ENCODE measurements at regions of chr9 and their contacts with region 1.

Region 1: DNA sequence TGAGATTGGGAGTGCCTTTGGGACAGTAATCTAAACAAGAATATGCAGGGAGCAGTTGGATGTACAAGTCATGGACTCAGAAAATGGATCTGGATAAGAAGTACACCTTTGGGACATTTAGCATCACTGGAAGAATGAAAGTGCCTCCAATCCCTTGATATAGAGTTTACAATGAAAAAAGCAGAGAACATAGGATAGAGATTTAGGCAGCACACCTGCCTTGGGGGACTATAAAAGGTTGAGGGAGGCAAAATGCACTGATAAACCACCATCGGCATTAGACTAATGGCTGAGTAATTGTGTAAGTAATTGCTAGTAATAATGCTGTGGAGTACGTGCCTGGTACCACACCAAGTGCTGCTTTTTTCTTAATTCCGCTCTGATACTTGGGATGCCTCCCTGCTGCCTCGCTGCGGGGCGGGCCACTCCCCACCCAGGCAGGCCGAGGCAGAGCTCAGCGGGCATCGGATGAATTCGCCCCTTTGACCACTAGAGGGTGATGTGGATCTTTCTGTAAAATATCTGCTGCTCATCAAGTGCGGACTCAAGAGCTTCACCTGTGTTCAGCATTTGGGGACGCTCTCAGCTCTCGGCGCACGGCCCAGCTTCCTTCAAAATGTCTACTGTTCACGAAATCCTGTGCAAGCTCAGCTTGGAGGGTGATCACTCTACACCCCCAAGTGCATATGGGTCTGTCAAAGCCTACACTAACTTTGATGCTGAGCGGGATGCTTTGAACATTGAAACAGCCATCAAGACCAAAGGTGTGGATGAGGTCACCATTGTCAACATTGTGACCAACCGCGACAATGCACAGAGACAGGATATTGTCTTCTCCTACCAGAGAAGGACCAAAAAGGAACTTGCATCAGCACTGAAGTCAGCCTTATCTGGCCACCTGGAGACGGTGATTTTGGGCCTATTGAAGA is 99.9 kb downstream of the ANKRD18B start:
- DNase-seq: peak; percentile 79
- ATAC-seq: peak; percentile 94
- H3K4me3 Mint-ChIP-seq: no peak overlapping the region
- H3K27ac Mint-ChIP-seq: no peak overlapping the region
- H3K4me1 Mint-ChIP-seq: peaks cover 6% of the 10 kb centered on the region
- H3K27me3 Mint-ChIP-seq: peaks cover 21% of the 10 kb centered on the region

Region 2: GRCh38 chr9:33638391-33638915 is 14.5 kb after region 1 on chr9:
- CTCF ChIA-PET with region 1: interaction called, 22 read pairs
- POLR2A ChIA-PET with region 1: no interaction called
- intact Hi-C with region 1: no loop called
- DNase-seq: no peak
- ATAC-seq: no peak
- H3K4me3 Mint-ChIP-seq: no peak overlapping the region
- H3K27ac Mint-ChIP-seq: no peak overlapping the region
- H3K4me1 Mint-ChIP-seq: no peaks in the 10 kb centered on the region
- H3K27me3 Mint-ChIP-seq: peaks cover 47% of the 10 kb centered on the region

Region 3: DNA sequence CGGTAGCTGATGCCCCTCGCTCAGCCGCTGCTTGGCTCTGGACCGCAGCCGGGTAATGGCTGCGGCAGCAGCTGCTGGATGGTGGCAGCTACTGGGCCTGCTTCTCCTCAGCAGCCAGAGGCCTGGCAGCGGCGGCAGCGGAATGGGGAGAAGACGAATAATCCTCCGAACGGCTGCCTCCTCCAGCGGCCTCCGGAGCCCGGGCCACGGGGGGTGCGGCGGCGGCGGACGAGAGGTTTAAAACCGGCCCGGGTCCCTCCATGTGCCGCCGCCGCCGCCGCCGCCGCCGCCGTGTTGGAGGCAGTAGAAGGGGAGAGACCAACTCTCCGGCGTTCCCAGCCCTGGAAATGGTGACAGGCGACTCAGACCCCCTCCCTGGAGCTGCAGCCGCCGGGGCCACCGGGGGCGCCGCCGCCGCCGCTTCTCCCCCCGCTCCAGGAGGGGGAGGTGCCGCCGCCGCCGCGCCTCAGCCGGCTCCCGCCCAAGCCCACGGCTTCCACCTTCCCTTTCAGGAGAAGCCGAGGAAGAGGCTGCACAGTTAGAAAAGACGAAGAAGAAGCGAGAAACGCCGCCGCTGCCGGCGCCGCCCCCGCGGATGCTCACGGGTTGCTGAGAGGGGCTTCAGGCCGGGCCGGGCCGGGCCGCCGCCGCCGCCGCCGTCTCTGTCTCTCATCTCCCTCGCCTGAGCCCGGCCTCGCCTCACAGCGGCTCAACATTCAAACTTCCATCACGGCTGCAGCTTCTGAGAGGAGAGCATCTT is 53.0 kb after region 1 on chr9:
- CTCF ChIA-PET with region 1: interaction called, 13 read pairs
- POLR2A ChIA-PET with region 1: no interaction called
- intact Hi-C with region 1: loop called in 1 of 2 experiments (anchors 1 kb)
- DNase-seq: peak; percentile 48
- ATAC-seq: peak; percentile 72
- H3K4me3 Mint-ChIP-seq: peak overlapping the region; percentile 74
- H3K27ac Mint-ChIP-seq: peak overlapping the region; percentile 65
- H3K4me1 Mint-ChIP-seq: peaks cover 6% of the 10 kb centered on the region
- H3K27me3 Mint-ChIP-seq: peaks cover 57% of the 10 kb centered on the region

Region 4: GRCh38 chr9:33721674-33722358 is 97.9 kb after region 1 on chr9:
- CTCF ChIA-PET with region 1: interaction called, 495 read pairs
- POLR2A ChIA-PET with region 1: no interaction called
- intact Hi-C with region 1: loop called (anchors 1 kb)
- DNase-seq: peak; percentile 94
- ATAC-seq: peak; percentile 68
- H3K4me3 Mint-ChIP-seq: no peak overlapping the region
- H3K27ac Mint-ChIP-seq: no peak overlapping the region
- H3K4me1 Mint-ChIP-seq: peaks cover 4% of the 10 kb centered on the region
- H3K27me3 Mint-ChIP-seq: peaks cover 5% of the 10 kb centered on the region

Region 5: GRCh38 chr9:34072868-34073590 is 449.1 kb after region 1 on chr9:
- CTCF ChIA-PET with region 1: no interaction called
- POLR2A ChIA-PET with region 1: no interaction called
- intact Hi-C with region 1: loop called in 1 of 2 experiments (anchors 1 kb)
- DNase-seq: no peak
- ATAC-seq: no peak
- H3K4me3 Mint-ChIP-seq: no peak overlapping the region
- H3K27ac Mint-ChIP-seq: no peak overlapping the region
- H3K4me1 Mint-ChIP-seq: no peaks in the 10 kb centered on the region
- H3K27me3 Mint-ChIP-seq: no peaks in the 10 kb centered on the region

Measured in activated CD4-positive, alpha-beta T cell treated with anti-CD3 and anti-CD28 coated beads for 36 hours (primary cell).